Activated CD4-positive, alpha-beta T cell treated with anti-CD3 and anti-CD28 coated beads, Interleukin-2, amount 10 ng/mL, durations not matched to agents 7 days and 5 days (primary cell): ENCODE measurements at regions of chr22 and their contacts with region 1.

Region 1: DNA sequence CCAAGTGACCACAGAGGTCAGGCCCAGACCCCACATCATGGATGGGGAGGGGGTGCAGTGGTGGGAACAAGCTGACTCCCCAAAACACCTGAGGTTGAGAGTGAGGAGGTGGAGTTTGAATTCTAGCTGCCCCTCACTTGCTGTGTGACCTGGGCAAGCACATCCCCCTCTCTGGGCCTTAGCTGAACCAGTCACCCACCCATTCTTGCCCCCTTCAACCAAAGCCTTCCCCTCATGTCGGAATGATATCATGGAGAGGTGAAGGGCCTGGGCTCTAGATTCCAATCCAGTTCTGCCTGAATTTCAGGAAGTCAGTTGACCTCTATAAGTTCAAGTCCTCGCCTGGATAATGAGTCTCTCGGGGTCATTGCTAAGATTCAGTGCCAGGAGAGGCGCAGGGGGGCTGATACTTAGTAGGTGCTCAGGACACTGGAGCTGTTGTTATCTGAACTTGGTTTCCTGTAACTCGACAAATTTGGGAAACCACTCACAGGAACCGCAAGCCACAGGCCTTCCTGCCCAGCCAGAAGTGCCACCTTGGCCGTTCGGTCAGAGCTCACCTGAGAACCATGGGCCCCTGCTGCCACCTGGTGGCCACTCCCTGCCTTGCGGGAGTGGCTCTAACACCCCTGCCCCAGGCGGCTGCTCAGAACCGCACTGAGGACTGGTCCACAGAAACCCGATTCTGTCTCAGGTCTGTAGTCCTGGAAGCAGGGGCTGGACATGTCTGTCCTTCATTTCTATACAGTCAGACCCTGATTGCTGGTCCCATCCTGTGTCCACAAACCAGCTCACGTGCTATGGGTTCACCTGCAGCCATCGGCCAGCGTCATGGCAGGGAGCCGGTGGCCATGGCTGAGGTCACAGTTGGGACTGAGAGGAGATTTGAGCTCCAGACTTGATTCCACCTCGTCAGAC is 6.9 kb downstream of the CDC42EP1 start:
- DNase-seq: peak; percentile 94
- H3K4me3 Mint-ChIP-seq: peak overlapping the region; percentile 41
- H3K27ac Mint-ChIP-seq: peak overlapping the region; percentile 73
- H3K4me1 Mint-ChIP-seq: peaks cover 23% of the 10 kb centered on the region
- H3K27me3 Mint-ChIP-seq: peaks cover 38% of the 10 kb centered on the region

Region 2: DNA sequence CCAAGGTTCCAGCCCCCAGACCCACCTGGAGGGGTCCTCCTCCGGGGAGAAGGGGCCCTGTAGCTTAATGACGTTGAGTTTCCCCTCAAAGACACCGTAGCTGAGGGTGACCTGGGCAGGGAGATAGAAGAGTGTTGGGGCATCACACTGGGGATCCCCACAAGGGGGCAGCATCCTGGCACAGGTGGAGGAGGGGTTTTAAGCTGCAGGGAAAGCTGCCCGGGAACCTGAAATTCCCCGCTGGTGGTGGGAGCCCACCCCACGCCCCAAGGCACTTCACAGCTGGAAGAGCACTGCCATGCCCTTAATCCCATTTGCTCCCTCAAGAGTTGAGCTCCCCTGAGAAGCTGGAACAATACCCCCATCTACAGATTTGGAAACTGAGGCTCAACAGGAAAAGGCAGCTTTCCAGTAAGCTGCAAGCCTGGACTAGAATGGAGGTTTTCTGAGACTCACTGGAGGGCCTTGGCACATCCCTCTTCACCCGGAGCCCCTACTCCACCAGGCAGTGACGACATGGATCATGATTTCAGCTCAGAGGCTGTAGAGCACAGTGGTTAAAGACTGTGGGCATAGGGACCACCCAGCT is 94.7 kb before region 1 on chr22:
- CTCF ChIA-PET with region 1: interaction called, 10 read pairs
- POLR2A ChIA-PET with region 1: no interaction called
- DNase-seq: peak; percentile 53
- H3K4me3 Mint-ChIP-seq: no peak overlapping the region
- H3K27ac Mint-ChIP-seq: no peak overlapping the region
- H3K4me1 Mint-ChIP-seq: peaks cover 5% of the 10 kb centered on the region
- H3K27me3 Mint-ChIP-seq: no peaks in the 10 kb centered on the region

Region 3: GRCh38 chr22:37538590-37539357 is 28.4 kb before region 1 on chr22:
- CTCF ChIA-PET with region 1: interaction called, 397 read pairs
- POLR2A ChIA-PET with region 1: no interaction called
- DNase-seq: peak; percentile 93
- H3K4me3 Mint-ChIP-seq: no peak overlapping the region
- H3K27ac Mint-ChIP-seq: peak overlapping the region; percentile 64
- H3K4me1 Mint-ChIP-seq: peaks cover 45% of the 10 kb centered on the region
- H3K27me3 Mint-ChIP-seq: peaks cover 17% of the 10 kb centered on the region

Region 4: GRCh38 chr22:37581504-37581903 is 14.3 kb after region 1 on chr22:
- CTCF ChIA-PET with region 1: interaction called, 29 read pairs
- POLR2A ChIA-PET with region 1: no interaction called
- DNase-seq: no peak
- H3K4me3 Mint-ChIP-seq: no peak overlapping the region
- H3K27ac Mint-ChIP-seq: no peak overlapping the region
- H3K4me1 Mint-ChIP-seq: peaks cover 13% of the 10 kb centered on the region
- H3K27me3 Mint-ChIP-seq: peaks cover 13% of the 10 kb centered on the region

Region 5: GRCh38 chr22:37588546-37589215 is 21.5 kb after region 1 on chr22:
- CTCF ChIA-PET with region 1: interaction called, 79 read pairs
- POLR2A ChIA-PET with region 1: no interaction called
- DNase-seq: no peak
- H3K4me3 Mint-ChIP-seq: no peak overlapping the region
- H3K27ac Mint-ChIP-seq: no peak overlapping the region
- H3K4me1 Mint-ChIP-seq: peaks cover 12% of the 10 kb centered on the region
- H3K27me3 Mint-ChIP-seq: peaks cover 2% of the 10 kb centered on the region

Region 6: DNA sequence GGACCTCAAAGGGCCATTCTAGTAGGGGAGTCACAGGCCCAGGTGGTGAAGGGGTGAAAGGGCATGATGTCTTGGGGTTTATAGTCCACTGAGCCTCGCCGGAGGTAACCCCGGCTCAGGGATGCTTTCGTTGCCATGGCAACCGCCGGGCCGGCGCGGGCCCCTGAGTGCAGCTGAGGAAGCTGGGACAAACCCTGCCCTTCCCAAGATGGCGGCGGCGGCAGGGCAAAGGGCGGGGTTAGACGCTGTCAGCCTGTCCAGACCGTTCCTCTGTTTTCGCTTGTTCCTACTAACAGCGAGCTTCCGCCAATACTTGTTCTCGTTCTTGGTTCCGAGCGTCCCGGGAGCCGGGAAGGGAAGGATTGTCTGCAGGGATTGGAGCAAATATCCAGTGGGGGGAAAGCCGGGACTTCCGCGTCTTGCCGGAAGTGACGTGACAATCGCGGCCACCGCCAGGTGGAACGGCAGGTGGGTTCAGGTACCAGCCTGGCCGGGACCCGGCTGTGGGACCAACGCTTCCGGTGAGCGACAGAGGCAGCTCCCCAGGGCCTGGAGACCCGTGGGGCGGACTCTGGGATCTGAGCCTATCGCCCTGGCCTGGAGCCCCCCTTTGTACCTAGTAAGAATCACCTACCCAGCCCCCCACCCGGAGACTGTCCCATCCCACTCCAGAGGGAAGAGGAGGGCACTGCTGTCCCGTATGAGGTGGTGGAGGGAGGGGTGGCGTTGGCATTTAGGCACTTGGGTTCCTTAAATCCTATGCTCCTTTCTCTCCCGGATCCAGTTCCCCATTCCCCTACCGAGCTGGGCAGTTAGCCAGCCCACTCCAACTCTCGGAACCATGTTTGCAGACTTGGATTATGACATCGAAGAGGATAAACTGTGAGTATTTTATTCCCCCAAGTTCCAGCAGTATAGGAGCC is 490.1 kb after region 1 on chr22 and contains the start of gene PICK1:
- CTCF ChIA-PET with region 1: no interaction called
- POLR2A ChIA-PET with region 1: no interaction called
- DNase-seq: peak; percentile 87
- H3K4me3 Mint-ChIP-seq: peak within 1 kb of the TSS; percentile 85
- H3K27ac Mint-ChIP-seq: peak within 1 kb of the TSS; percentile 99
- H3K4me1 Mint-ChIP-seq: peaks cover 16% of the 10 kb centered on the region
- H3K27me3 Mint-ChIP-seq: peaks cover 3% of the 10 kb centered on the region
- total RNA-seq, gene PICK1: 15.2 to 15.4 TPM